Activated B cell treated with CpG ODN at 0.5 μM for 24 hours (primary cell): ENCODE measurements at regions of chr16 and their contacts with region 1.

Region 1: DNA sequence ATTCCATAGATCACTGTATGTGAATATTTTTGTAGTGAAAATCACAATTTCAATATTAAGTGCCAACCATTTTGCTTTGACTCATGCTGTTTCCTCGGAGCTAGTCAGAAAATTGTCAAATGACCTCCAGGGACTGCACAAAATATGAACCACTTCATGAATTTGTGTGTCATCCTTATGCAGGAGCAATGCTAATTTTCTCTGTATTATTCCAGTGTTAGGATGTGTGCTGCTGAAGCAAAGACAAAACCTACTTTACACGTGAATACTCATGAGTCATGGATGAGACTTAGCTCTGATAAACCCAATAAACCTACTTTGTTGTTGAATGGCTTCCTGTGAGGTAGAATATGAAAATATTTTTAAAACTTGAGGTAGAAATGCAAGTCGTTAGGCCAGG is 65.2 kb downstream of the SHCBP1 start:
- DNase-seq: no peak
- ATAC-seq: no peak
- H3K4me3 Mint-ChIP-seq: no peak overlapping the region
- H3K27ac Mint-ChIP-seq: no peak overlapping the region
- H3K4me1 Mint-ChIP-seq: no peaks in the 10 kb centered on the region
- H3K27me3 Mint-ChIP-seq: peaks cover 7% of the 10 kb centered on the region
- CTCF ChIP-seq: no peak

Region 2: DNA sequence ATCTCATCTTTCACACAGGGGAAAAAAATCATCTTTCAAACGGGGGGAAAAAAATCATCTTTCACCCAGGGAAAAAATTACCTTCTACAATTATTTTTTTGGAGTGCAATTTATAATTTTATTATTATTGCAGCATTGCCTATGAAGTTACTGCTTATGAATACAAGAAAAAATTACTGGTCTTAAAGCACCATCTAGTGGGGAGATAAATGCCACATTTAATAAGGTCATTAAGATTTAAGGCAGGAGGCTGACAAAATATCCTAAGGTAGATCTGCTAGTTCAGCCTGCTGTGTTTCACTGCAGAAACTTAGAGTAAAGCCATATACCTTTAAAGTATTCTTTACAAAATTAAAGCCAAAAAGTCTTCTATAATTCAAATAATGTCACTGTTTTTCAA is 51.6 kb after region 1 on chr16:
- CTCF ChIA-PET with region 1: interaction called, 46 read pairs
- POLR2A ChIA-PET with region 1: no interaction called
- intact Hi-C with region 1: loop called (anchors 1 kb)
- DNase-seq: no peak
- ATAC-seq: no peak
- H3K4me3 Mint-ChIP-seq: no peak overlapping the region
- H3K27ac Mint-ChIP-seq: no peak overlapping the region
- H3K4me1 Mint-ChIP-seq: no peaks in the 10 kb centered on the region
- H3K27me3 Mint-ChIP-seq: no peaks in the 10 kb centered on the region
- CTCF ChIP-seq: no peak

Region 3: GRCh38 chr16:46801428-46802049 is 245.6 kb after region 1 on chr16:
- CTCF ChIA-PET with region 1: no interaction called
- POLR2A ChIA-PET with region 1: no interaction called
- intact Hi-C with region 1: loop called (anchors 10 kb)
- DNase-seq: no peak
- ATAC-seq: no peak
- H3K4me3 Mint-ChIP-seq: no peak overlapping the region
- H3K27ac Mint-ChIP-seq: no peak overlapping the region
- H3K4me1 Mint-ChIP-seq: no peaks in the 10 kb centered on the region
- H3K27me3 Mint-ChIP-seq: no peaks in the 10 kb centered on the region
- CTCF ChIP-seq: no peak

Region 4: GRCh38 chr16:46929378-46930332 is 373.7 kb after region 1 on chr16:
- CTCF ChIA-PET with region 1: interaction called, 3 read pairs
- POLR2A ChIA-PET with region 1: no interaction called
- intact Hi-C with region 1: loop called (anchors 1 kb)
- DNase-seq: peak; percentile 69
- ATAC-seq: peak; percentile 76
- H3K4me3 Mint-ChIP-seq: no peak overlapping the region
- H3K27ac Mint-ChIP-seq: no peak overlapping the region
- H3K4me1 Mint-ChIP-seq: peaks cover 12% of the 10 kb centered on the region
- H3K27me3 Mint-ChIP-seq: no peaks in the 10 kb centered on the region
- CTCF ChIP-seq: peak; percentile 59